ENCODE measurements at regions of chr11 and their contacts with region 1.

Region 1: GRCh38 chr11:70270104-70270876 is at the start of gene PPFIA1:
- DNase-seq: peak; percentile 97
- H3K4me3 ChIP-seq: peak within 1 kb of the TSS; percentile 86 to 95 (median 88)
- H3K27ac ChIP-seq: peak within 1 kb of the TSS; percentile 66 to 94 (median 86)
- H3K4me1 ChIP-seq: peaks cover 10 to 11% of the 10 kb centered on the region in 2 donors
- H3K27me3 ChIP-seq: no peaks in the 10 kb centered on the region
- CTCF ChIP-seq: no peak
- POLR2A ChIP-seq: peak; percentile 95 to 98
- total RNA-seq, gene PPFIA1: 50.9 to 57.9 (median 54.6) TPM

Region 2: DNA sequence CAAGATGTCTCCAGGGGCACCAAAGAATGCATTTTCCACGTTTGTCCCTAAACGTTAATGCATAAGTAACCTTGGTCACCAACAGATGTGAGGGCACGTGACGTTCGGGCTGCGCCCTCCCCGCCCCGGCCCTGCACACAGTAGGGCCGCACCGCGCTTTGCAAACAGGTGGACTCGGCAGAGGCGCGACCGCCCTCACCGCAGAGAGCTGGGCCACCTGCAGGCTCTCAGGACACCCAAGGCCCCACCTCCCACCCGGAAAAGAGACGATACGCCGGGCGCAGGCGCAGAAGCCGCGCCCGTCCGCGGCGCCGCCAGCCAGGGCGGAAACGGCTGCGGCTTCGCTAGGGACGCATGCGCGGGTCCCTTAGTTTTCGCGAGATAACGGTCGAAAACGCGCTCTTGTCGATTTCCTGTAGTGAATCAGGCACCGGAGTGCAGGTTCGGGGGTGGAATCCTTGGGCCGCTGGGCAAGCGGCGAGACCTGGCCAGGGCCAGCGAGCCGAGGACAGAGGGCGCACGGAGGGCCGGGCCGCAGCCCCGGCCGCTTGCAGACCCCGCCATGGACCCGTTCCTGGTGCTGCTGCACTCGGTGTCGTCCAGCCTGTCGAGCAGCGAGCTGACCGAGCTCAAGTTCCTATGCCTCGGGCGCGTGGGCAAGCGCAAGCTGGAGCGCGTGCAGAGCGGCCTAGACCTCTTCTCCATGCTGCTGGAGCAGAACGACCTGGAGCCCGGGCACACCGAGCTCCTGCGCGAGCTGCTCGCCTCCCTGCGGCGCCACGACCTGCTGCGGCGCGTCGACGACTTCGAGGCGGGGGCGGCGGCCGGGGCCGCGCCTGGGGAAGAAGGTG is 67.2 kb before region 1 on chr11 and contains the start of gene FADD:
- intact Hi-C with region 1: loop called (anchors 10 kb)
- DNase-seq: peak; percentile 91 to 92
- H3K4me3 ChIP-seq: peak within 1 kb of the TSS; percentile 43 to 96 (median 87)
- H3K27ac ChIP-seq: peak within 1 kb of the TSS; percentile 92 to 95 (median 94)
- H3K4me1 ChIP-seq: peaks cover 12 to 13% of the 10 kb centered on the region in 2 donors
- H3K27me3 ChIP-seq: no peaks in the 10 kb centered on the region
- CTCF ChIP-seq: peak in 1 of 6 experiments; percentile 14
- POLR2A ChIP-seq: peak; percentile 63 to 78
- total RNA-seq, gene FADD: 18.1 to 32.6 (median 21.1) TPM

Region 3: GRCh38 chr11:70292863-70293262 is 22.6 kb after region 1 on chr11:
- intact Hi-C with region 1: no loop called
- DNase-seq: no peak
- H3K4me3 ChIP-seq: no peak overlapping the region
- H3K27ac ChIP-seq: no peak overlapping the region
- H3K4me1 ChIP-seq: peaks cover 0 to 4% of the 10 kb centered on the region in 2 donors
- H3K27me3 ChIP-seq: no peaks in the 10 kb centered on the region
- CTCF ChIP-seq: no peak
- POLR2A ChIP-seq: no peak

Region 4: DNA sequence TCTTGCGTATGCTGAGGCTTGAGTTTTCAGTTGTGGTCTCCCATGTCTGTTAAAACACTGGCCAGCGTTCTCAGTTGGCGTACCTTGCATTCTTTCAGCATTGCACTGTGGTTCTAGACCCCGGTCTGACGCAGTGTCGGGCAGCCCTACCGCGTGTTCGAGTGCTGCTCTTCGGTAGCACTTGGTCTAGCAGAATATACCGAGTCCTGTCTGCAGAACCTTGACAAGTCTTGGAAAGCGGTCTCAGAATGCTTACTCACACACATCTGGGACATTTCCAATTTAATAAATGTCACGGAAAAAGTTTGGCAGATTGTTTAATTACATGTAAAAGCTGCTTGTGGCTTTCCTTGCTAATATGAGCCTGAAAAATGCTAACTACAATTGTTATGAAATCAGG is 32.8 kb after region 1 on chr11:
- intact Hi-C with region 1: no loop called
- DNase-seq: no peak
- H3K4me3 ChIP-seq: no peak overlapping the region
- H3K27ac ChIP-seq: no peak overlapping the region
- H3K4me1 ChIP-seq: peaks cover 6 to 17% of the 10 kb centered on the region in 2 donors
- H3K27me3 ChIP-seq: no peaks in the 10 kb centered on the region
- CTCF ChIP-seq: no peak
- POLR2A ChIP-seq: no peak

Region 5: DNA sequence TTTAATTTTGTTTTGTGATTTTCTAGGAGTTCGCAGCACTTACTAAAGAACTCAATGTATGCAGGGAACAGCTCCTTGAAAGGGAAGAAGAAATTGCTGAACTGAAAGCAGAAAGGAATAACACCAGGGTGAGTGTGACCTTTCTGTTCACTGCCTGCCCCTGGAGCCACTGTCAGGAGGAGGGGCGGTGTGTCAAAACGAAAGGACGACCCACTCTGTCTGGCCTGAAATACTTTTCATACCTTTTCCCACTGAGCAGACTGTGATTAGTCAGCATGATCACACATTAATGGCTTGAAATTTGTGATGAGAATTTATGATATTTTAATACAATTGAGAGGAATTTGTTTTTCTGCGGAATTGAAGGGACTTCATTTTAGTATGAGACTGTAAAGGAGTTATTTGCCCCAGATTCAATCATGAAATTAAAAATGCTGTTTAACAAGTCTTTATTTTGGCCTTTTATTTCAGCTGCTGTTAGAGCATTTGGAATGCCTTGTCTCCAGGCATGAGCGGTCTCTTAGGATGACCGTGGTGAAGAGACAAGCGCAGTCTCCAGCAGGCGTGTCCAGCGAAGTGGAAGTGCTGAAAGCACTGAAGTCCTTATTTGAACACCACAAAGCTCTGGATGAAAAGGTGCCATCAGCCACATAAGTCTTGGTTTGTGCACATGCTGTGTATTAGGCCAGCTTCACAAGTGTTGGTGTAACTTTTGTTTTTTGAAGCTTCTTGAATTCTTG is 54.3 kb after region 1 on chr11:
- intact Hi-C with region 1: loop called (anchors 5 kb)
- DNase-seq: peak; percentile 75 to 87
- H3K4me3 ChIP-seq: no peak overlapping the region
- H3K27ac ChIP-seq: peak overlapping the region; percentile 60 to 74 (median 68)
- H3K4me1 ChIP-seq: peaks cover 37 to 41% of the 10 kb centered on the region in 2 donors
- H3K27me3 ChIP-seq: no peaks in the 10 kb centered on the region
- CTCF ChIP-seq: no peak
- POLR2A ChIP-seq: no peak

Measured in thyroid gland (tissue), 4 donors.